GM10248 (cell line): ENCODE measurements at regions of chr1 and their contacts with region 1.

Region 1: DNA sequence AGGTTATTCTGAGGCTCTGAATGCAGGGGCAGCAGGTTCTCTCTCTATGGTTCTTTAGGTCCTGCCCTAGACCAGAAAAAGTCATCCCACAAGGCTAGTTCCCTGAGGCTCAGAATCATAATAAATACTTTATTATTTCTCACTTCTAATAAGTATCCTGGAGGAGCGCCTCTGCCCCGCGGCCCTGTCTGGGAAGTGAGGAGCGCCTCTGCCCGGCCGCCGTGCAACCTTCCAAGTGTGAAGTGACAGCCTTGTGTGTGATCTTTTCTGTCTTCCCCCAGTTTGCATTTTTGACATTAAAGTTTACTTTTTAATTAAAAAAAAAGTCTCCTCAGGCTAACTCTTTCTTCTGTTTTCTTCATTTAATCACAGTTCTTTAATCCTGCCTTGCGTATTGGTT is 11.5 kb downstream of the AIM2 start:
- DNase-seq: no peak
- CTCF ChIP-seq: no peak

Region 2: GRCh38 chr1:158972841-158973240 is 92.3 kb before region 1 on chr1:
- CTCF ChIA-PET with region 1: no interaction called
- POLR2A ChIA-PET with region 1: no interaction called
- DNase-seq: no peak
- CTCF ChIP-seq: peak; percentile 11

Region 3: GRCh38 chr1:159054427-159054826 is 10.7 kb before region 1 on chr1:
- CTCF ChIA-PET with region 1: interaction called, 10 read pairs
- POLR2A ChIA-PET with region 1: no interaction called
- DNase-seq: no peak
- CTCF ChIP-seq: no peak

Region 4: DNA sequence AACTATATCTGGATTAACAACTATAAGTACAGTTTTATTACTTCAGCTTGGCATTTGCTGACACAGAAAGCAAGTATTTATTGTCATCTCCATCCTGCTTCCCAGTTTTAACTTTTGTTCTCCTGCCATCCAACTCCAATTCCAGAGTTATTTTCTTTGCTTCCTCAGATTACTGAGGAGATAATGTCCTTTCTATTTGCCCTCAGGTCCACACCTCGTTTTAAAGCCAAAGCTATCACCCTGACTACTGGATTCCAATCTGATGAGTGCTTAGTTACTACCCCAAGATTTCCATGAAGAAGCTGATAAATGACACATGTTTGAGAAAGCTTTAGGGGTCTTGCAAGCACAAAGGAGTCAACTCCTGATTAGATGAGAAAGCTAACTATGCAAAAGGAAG is 164.8 kb after region 1 on chr1:
- CTCF ChIA-PET with region 1: no interaction called
- POLR2A ChIA-PET with region 1: no interaction called
- DNase-seq: no peak
- CTCF ChIP-seq: no peak